ENCODE measurements at regions of chr1 and their contacts with region 1.

Region 1: DNA sequence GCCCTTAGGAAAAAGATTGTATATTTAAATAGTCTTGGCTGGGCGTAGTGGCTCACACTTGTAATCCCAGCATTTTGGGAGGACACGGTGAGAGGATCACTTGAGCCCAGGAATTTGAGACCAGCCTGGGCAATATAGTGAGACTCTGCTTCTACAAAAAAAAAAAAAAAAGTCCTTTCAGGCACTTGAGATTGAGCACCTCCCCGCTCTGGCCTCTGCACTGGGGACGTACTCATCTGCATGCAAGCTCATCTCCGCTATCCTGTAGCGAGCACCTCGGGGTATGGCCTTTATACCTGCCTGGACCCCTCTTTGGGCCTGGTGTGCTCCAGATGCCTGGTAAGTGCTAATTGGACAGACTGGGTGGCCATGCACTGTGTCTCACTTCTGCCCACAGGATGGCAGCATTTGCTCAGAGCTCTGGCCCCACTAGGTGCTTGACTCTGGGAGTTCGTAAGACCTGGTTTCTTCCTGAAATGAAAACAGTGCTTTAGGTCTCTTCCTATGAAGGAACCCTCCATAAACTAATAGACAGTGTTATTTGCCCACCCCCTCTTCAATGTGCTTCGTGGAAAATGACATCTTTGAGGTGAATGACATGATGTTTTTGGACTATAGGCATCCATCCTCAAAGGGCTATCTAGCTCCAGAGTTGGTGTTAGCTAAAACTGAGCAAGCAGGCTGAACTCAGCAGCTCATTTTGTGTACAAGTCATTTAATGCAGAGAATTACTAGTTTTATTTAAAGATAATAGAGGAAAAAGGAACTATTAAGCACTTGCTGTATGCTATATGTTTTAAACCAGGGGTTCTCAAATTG is 61.7 kb upstream of the ADAR start:
- DNase-seq: peak; percentile 51 to 74 (median 68)
- H3K4me3 ChIP-seq: no peak overlapping the region
- H3K27ac ChIP-seq: no peak overlapping the region
- H3K4me1 ChIP-seq: no peaks in the 10 kb centered on the region
- H3K27me3 ChIP-seq: no peaks in the 10 kb centered on the region
- CTCF ChIP-seq: peak in 2 of 3 donors; percentile 55 to 56
- EP300 ChIP-seq: no peak
- POLR2A ChIP-seq: no peak

Region 2: DNA sequence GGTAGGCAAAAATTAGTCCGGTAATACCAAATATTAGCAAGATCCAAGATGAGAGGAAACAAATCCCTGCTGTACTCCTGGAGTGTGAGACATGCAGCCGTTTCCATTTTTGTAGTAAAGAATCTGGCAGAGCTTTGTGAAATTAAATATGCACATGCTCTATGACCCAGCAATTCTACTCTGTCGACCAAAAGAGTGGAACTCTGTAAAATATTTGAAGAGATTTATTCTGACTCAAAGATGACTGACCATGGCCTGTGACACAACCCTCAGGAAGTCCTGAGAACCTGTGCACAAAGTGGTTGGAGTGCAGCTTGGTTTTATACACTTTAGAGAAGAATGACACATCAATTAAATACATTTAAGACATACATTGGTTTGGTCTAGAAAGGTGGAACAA is 381.0 kb before region 1 on chr1:
- intact Hi-C with region 1: no loop called
- DNase-seq: no peak
- H3K4me3 ChIP-seq: no peak overlapping the region
- H3K27ac ChIP-seq: no peak overlapping the region
- H3K4me1 ChIP-seq: no peaks in the 10 kb centered on the region
- H3K27me3 ChIP-seq: no peaks in the 10 kb centered on the region
- CTCF ChIP-seq: no peak
- EP300 ChIP-seq: no peak
- POLR2A ChIP-seq: no peak

Region 3: DNA sequence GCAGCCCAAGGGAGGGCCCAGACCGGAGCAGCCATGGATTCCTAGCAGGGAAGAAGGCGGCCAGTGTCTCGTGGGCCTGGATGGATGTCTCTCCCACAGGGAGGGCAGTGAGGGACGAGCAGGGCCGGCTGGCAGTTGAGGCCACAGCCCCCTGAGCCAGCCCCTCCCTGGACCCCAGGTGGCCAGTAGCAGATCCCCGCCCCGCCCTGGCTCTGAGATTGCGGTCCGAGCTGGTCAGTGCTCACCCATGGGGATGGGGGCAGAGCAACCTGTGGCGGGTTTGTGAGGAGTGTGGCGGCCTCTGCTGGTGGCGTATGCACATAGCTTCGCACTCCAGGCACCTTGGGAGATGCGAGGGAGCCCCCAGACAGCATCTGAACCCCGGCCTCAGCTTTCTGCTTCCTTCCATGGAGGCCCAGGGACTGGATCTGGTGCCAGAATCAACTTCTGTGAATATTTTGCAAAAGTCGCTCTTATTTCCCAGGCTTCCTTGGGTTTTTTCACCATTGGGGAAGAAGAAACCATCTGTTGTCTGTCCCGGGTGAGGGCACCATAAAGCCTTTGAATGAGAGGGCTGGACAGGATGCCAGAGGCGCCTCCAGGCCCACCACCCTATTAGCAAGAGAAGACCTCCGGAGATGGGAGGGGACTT is 208.8 kb after region 1 on chr1:
- intact Hi-C with region 1: loop called in 3 of 4 experiments (anchors 5 kb)
- DNase-seq: peak; percentile 69 to 88 (median 83)
- H3K4me3 ChIP-seq: no peak overlapping the region
- H3K27ac ChIP-seq: no peak overlapping the region
- H3K4me1 ChIP-seq: no peaks in the 10 kb centered on the region
- H3K27me3 ChIP-seq: no peaks in the 10 kb centered on the region
- CTCF ChIP-seq: peak; percentile 70 to 89 (median 87)
- EP300 ChIP-seq: no peak
- POLR2A ChIP-seq: no peak

Region 4: DNA sequence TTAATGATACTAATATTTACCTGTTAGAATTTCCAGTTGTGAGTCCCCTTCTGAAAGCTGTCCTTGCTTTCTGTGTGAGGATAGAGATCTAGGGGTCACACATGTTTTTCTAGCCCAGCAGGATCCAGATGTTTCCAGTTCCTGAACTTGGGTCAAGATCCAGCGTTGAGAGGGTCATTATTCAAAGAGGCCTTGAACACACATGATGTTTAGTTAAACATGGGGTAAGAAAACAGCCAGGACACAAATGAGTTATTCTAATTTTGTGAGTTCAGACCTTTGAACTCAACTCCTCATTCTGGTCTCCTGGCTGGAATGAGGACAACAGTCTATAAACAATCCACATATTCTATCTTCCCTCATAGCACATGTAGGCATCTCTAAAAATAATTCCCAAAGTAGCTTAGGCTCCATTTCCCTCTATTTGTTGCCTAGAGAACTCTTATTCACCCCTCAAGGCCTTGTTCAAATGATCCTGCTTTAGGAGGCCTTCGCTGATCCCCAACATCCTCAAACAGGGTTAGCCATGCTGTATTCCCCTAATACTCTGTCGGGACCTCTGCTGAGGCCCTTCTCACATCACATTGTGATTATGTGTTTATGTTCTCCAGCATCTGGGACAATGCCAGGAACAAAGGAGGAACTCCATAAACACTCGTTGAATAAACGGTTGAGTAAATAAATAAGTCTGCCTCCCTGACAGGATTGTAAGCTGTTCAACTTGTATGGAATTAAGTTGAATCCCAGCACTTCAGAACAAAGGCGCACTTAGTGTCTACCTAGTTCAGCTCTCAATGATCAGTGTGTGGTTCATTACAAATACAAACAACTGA is 215.4 kb after region 1 on chr1:
- intact Hi-C with region 1: loop called in 2 of 4 experiments (anchors 5 kb)
- DNase-seq: no peak
- H3K4me3 ChIP-seq: no peak overlapping the region
- H3K27ac ChIP-seq: no peak overlapping the region
- H3K4me1 ChIP-seq: peaks cover 3% of the 10 kb centered on the region
- H3K27me3 ChIP-seq: no peaks in the 10 kb centered on the region
- CTCF ChIP-seq: no peak
- EP300 ChIP-seq: no peak
- POLR2A ChIP-seq: no peak